Activated CD8-positive, alpha-beta memory T cell treated with anti-CD3 and anti-CD28 coated beads, Interleukin-2, amount 10 ng/mL, durations not matched to agents 7 days and 5 days (primary cell): ENCODE measurements at regions of chr16 and their contacts with region 1.

Region 1: GRCh38 chr16:71961066-71962039 is 38.8 kb downstream of the PKD1L3 start:
- DNase-seq: peak; percentile 88
- ATAC-seq: peak; percentile 93
- H3K4me3 Mint-ChIP-seq: no peak overlapping the region
- H3K27ac Mint-ChIP-seq: no peak overlapping the region
- H3K4me1 Mint-ChIP-seq: peaks cover 17% of the 10 kb centered on the region
- H3K27me3 Mint-ChIP-seq: peaks cover 15% of the 10 kb centered on the region

Region 2: GRCh38 chr16:71564155-71564967 is 397.0 kb before region 1 on chr16:
- CTCF ChIA-PET with region 1: interaction called, 17 read pairs
- DNase-seq: no peak
- ATAC-seq: no peak
- H3K4me3 Mint-ChIP-seq: peak overlapping the region; percentile 79
- H3K27ac Mint-ChIP-seq: peak overlapping the region; percentile 93
- H3K4me1 Mint-ChIP-seq: peaks cover 18% of the 10 kb centered on the region
- H3K27me3 Mint-ChIP-seq: peaks cover 10% of the 10 kb centered on the region

Region 3: GRCh38 chr16:71904239-71904638 is 57.1 kb before region 1 on chr16:
- CTCF ChIA-PET with region 1: interaction called, 13 read pairs
- DNase-seq: no peak
- ATAC-seq: no peak
- H3K4me3 Mint-ChIP-seq: no peak overlapping the region
- H3K27ac Mint-ChIP-seq: no peak overlapping the region
- H3K4me1 Mint-ChIP-seq: peaks cover 55% of the 10 kb centered on the region
- H3K27me3 Mint-ChIP-seq: no peaks in the 10 kb centered on the region

Region 4: DNA sequence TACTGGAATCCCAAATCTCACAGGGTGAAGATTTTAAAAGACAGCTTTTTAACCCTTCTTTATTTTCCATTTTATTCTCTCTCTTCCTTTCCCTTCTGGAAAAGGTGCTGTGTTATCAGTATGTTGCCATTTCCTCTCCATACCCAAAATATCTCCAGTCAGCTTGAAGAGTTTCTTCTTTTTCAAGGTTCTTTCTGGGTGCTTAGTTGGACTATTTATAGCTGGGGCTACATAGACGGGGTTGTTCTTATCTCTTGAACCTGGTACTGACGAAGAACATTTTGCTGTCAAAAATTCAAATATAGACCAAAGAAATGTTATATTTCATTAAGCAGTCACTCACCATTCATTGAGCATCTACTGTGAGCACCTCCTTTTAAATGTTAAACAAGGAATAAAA is 17.5 kb before region 1 on chr16:
- CTCF ChIA-PET with region 1: interaction called, 10 read pairs
- DNase-seq: no peak
- ATAC-seq: no peak
- H3K4me3 Mint-ChIP-seq: no peak overlapping the region
- H3K27ac Mint-ChIP-seq: no peak overlapping the region
- H3K4me1 Mint-ChIP-seq: peaks cover 1% of the 10 kb centered on the region
- H3K27me3 Mint-ChIP-seq: peaks cover 17% of the 10 kb centered on the region